T-cell (primary cell): ENCODE measurements at regions of chr18 and their contacts with region 1.

Region 1: DNA sequence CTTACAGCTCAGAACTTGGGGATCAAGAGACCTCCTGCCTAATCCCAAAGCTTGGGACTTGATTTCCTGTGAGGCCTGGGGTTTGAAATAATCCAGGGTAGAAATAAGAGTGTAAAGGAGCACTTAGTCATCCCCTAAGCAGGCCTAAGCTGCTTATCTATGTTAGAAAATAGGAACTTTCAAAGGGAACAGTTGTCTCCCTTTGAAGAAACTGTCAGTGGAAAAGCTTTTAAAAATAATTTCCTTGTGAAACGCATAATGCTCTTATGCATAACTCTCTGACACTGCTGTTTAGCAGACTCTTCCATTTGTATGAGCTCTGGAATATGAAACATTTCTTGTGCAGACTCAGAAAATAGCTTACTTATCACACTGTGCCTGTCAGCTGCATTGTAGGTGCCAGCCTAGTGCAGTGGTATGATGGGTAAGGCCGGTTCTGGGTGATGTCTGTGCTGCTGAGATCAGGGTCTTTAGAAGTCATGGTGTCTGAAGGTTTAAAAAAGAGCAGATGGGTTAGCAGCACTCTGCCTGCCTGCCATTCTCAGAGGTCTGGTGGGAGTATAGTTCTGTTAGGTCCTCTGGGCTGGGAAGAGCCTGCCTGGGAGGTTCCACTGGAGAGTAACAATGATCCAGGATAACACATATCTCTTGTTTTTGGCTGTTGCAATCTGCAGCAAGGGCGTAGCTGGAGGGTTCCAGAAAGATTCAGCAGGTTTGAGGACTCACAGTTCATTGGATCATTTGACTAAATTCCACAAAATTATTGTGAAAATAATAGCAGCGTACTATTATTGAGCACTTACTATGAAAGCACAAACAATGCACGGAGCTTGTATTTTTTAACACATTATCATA is 283.2 kb upstream of the MEX3C start:
- DNase-seq: no peak
- ATAC-seq: no peak
- H3K4me3 ChIP-seq: no peak overlapping the region
- H3K4me3 Mint-ChIP-seq: no peak overlapping the region
- H3K27ac ChIP-seq: no peak overlapping the region
- H3K27ac Mint-ChIP-seq: no peak overlapping the region
- H3K4me1 ChIP-seq: no peaks in the 10 kb centered on the region
- H3K4me1 Mint-ChIP-seq: no peaks in the 10 kb centered on the region
- H3K27me3 ChIP-seq: peaks cover 0 to 5% of the 10 kb centered on the region in 2 experiments
- H3K27me3 Mint-ChIP-seq: peaks cover 0 to 10% of the 10 kb centered on the region in 2 donors

Region 2: GRCh38 chr18:51425889-51426288 is 54.7 kb before region 1 on chr18:
- CTCF ChIA-PET with region 1: no interaction called
- POLR2A ChIA-PET with region 1: no interaction called
- DNase-seq: no peak
- ATAC-seq: no peak
- H3K4me3 ChIP-seq: no peak overlapping the region
- H3K4me3 Mint-ChIP-seq: no peak overlapping the region
- H3K27ac ChIP-seq: no peak overlapping the region
- H3K27ac Mint-ChIP-seq: no peak overlapping the region
- H3K4me1 ChIP-seq: no peaks in the 10 kb centered on the region
- H3K4me1 Mint-ChIP-seq: no peaks in the 10 kb centered on the region
- H3K27me3 ChIP-seq: no peaks in the 10 kb centered on the region
- H3K27me3 Mint-ChIP-seq: peaks cover 8 to 13% of the 10 kb centered on the region in 2 donors

Region 3: GRCh38 chr18:51491661-51492372 is 11.2 kb after region 1 on chr18:
- CTCF ChIA-PET with region 1: no interaction called
- POLR2A ChIA-PET with region 1: no interaction called
- DNase-seq: no peak
- ATAC-seq: no peak
- H3K4me3 ChIP-seq: no peak overlapping the region
- H3K4me3 Mint-ChIP-seq: no peak overlapping the region
- H3K27ac ChIP-seq: no peak overlapping the region
- H3K27ac Mint-ChIP-seq: no peak overlapping the region
- H3K4me1 ChIP-seq: no peaks in the 10 kb centered on the region
- H3K4me1 Mint-ChIP-seq: no peaks in the 10 kb centered on the region
- H3K27me3 ChIP-seq: no peaks in the 10 kb centered on the region
- H3K27me3 Mint-ChIP-seq: peaks cover 0 to 8% of the 10 kb centered on the region in 2 donors

Region 4: GRCh38 chr18:51513541-51513940 is 32.9 kb after region 1 on chr18:
- CTCF ChIA-PET with region 1: no interaction called
- POLR2A ChIA-PET with region 1: interaction called in 1 of 2 experiments, 10 read pairs
- DNase-seq: no peak
- ATAC-seq: no peak
- H3K4me3 ChIP-seq: no peak overlapping the region
- H3K4me3 Mint-ChIP-seq: no peak overlapping the region
- H3K27ac ChIP-seq: no peak overlapping the region
- H3K27ac Mint-ChIP-seq: no peak overlapping the region
- H3K4me1 ChIP-seq: no peaks in the 10 kb centered on the region
- H3K4me1 Mint-ChIP-seq: no peaks in the 10 kb centered on the region
- H3K27me3 ChIP-seq: no peaks in the 10 kb centered on the region
- H3K27me3 Mint-ChIP-seq: peaks cover 4% of the 10 kb centered on the region in 2 donors

Region 5: DNA sequence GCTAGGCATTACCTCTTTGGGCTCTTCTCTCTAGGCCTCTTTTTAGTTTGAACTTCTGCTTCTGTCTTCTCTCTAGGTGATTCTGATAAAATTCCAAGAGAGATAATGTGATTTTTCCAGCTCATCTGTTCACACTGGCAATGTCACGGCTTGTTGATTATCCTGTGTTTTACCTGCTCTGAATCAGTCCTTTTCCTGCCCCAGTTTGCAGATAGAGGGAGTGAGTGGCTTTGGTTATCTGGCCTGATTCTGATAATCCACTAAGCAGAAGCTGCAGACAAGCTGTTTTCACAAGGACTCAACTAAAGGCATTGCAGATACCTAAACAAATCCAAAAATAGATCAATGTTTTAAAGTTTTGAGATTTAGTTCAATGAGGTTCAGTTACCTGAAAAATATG is 971.2 kb after region 1 on chr18:
- CTCF ChIA-PET with region 1: no interaction called
- POLR2A ChIA-PET with region 1: no interaction called
- DNase-seq: no peak
- ATAC-seq: no peak
- H3K4me3 ChIP-seq: no peak overlapping the region
- H3K4me3 Mint-ChIP-seq: no peak overlapping the region
- H3K27ac ChIP-seq: no peak overlapping the region
- H3K27ac Mint-ChIP-seq: no peak overlapping the region
- H3K4me1 ChIP-seq: no peaks in the 10 kb centered on the region
- H3K4me1 Mint-ChIP-seq: no peaks in the 10 kb centered on the region
- H3K27me3 ChIP-seq: no peaks in the 10 kb centered on the region
- H3K27me3 Mint-ChIP-seq: no peaks in the 10 kb centered on the region